ENCODE measurements at regions of chr2 and their contacts with region 1.

Region 1: GRCh38 chr2:218807626-218808025 is 24.0 kb downstream of the PRKAG3 start:
- DNase-seq: peak in 1 of 2 donors; percentile 15
- H3K4me3 ChIP-seq: no peak overlapping the region
- H3K27ac ChIP-seq: peak overlapping the region; percentile 89 to 91
- H3K4me1 ChIP-seq: peaks cover 4% of the 10 kb centered on the region in 2 donors
- H3K27me3 ChIP-seq: no peaks in the 10 kb centered on the region
- CTCF ChIP-seq: no peak
- POLR2A ChIP-seq: no peak

Region 2: DNA sequence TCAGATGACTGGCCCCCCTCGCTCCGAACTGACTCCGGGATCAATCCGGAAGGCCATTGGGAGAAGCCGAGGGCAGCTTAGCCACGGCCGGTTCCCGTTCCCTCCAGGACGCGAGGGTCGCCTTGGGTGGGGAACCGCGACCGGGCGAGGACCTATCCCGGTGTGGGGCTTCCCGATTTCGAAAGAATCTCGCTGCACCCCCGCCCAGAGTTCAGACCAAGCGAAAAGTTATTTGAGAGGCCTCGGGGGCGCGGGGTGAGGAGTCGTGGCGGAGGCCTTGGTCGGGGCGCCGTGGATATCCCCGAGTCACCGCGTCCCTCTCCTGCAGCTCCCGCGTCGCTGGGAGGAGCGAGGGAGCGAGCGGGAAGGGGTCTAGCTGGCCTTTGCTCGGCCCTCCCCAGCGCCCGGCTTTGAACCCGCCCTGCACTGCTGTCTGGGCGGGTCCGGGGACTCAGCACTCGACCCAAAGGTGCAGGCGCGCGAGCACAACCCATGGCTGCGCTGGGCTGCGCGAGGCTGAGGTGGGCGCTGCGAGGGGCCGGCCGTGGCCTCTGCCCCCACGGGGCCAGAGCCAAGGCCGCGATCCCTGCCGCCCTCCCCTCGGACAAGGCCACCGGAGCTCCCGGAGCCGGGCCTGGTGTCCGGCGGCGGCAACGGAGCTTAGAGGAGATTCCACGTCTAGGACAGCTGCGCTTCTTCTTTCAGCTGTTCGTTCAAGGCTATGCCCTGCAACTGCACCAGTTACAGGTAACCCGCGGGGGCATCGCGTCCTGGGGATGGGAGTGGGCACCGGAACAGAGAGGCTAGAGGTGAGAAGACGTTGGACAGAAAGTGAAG is 25.7 kb before region 1 on chr2 and contains the start of gene CYP27A1:
- intact Hi-C with region 1: no loop called
- DNase-seq: peak; percentile 50 to 58
- H3K4me3 ChIP-seq: peak within 1 kb of the TSS; percentile 69 to 80 (median 76)
- H3K27ac ChIP-seq: peak within 1 kb of the TSS; percentile 91
- H3K4me1 ChIP-seq: no peaks in the 10 kb centered on the region
- H3K27me3 ChIP-seq: no peaks in the 10 kb centered on the region
- CTCF ChIP-seq: no peak
- POLR2A ChIP-seq: peak; percentile 18
- total RNA-seq, gene CYP27A1: 25.6 to 65.0 (median 28.8) TPM

Region 3: DNA sequence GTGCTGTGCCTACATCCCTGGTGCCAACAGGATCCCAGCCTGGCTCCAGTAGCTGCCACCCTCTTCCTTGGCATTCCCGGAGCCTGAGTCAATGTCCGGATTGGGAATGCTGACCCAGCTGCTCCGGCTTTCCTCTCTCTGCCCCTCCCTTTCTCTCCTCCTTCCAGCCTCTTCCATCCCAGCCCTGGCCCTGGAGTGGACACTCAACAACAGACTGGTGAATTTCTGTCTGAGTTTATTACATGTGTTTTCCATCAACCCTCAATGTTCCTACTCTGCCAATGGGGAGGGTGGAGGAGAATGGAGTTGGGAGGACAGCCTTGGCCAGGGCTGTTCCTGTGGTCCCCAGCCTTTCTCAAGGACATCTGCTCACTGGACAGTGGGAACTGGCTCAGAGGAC is 24.9 kb after region 1 on chr2:
- intact Hi-C with region 1: loop called (anchors 1 kb)
- DNase-seq: no peak
- H3K4me3 ChIP-seq: no peak overlapping the region
- H3K27ac ChIP-seq: peak overlapping the region in 1 of 2 donors; percentile 32
- H3K4me1 ChIP-seq: no peaks in the 10 kb centered on the region
- H3K27me3 ChIP-seq: no peaks in the 10 kb centered on the region
- CTCF ChIP-seq: no peak
- POLR2A ChIP-seq: no peak